A673 (cell line): ENCODE measurements at regions of chr10 and their contacts with region 1.

Region 1: GRCh38 chr10:99315853-99316252 is 13.3 kb upstream of the CNNM1 start:
- DNase-seq: no peak
- H3K4me3 ChIP-seq: no peak overlapping the region
- H3K27ac ChIP-seq: no peak overlapping the region
- H3K4me1 ChIP-seq: no peaks in the 10 kb centered on the region
- H3K27me3 ChIP-seq: peaks cover 16% of the 10 kb centered on the region
- CTCF ChIP-seq: no peak

Region 2: DNA sequence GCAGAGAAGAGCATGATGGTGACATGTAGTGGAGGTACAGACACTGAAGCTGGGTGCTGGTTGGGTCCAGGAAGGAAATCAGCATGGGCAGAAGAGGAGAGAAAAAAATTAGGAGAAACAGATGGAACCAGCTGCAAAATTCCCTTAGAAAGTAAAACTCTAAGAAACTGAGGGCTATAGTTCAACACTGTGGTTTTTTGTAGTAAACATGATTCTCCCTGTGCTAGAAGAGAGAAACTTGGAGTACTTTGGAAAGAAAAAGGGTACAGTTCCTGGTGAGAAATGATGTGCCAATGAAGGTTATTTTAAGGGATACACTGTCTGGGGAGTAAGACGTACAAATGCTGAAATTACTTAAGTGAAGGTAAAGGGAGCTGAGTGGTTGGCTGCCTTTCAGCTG is 687.6 kb before region 1 on chr10:
- CTCF ChIA-PET with region 1: no interaction called
- POLR2A ChIA-PET with region 1: interaction called, 13 read pairs
- intact Hi-C with region 1: no loop called
- DNase-seq: no peak
- H3K4me3 ChIP-seq: no peak overlapping the region
- H3K27ac ChIP-seq: no peak overlapping the region
- H3K4me1 ChIP-seq: no peaks in the 10 kb centered on the region
- H3K27me3 ChIP-seq: no peaks in the 10 kb centered on the region
- CTCF ChIP-seq: no peak

Region 3: DNA sequence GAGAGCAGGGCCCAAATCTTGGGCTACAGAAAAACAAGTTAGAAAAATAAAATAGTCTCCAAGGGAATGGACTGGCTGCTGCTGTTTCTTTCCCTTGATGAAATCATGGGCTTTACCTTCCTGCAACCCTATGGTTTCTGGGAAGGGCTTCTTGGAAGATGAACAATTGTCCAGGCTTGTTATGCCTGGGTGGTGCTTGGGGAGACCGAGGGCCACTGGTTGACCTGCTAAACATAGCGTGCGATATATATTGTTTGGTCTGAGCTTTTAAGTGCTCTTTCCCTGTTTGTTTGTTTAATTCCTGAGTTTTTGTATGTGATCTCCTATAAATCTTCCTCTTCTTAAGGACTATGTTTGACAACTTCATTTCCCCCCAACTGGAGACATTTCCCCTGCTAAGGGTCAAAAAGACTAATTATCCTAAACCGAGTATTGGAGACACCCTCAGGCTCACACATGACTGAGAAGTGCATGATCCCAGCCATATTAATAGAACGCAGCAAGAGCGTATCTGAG is 266.5 kb after region 1 on chr10:
- CTCF ChIA-PET with region 1: no interaction called
- POLR2A ChIA-PET with region 1: no interaction called
- intact Hi-C with region 1: no loop called
- DNase-seq: no peak
- H3K4me3 ChIP-seq: no peak overlapping the region
- H3K27ac ChIP-seq: no peak overlapping the region
- H3K4me1 ChIP-seq: no peaks in the 10 kb centered on the region
- H3K27me3 ChIP-seq: no peaks in the 10 kb centered on the region
- CTCF ChIP-seq: no peak